Aorta (tissue), 5 donors: ENCODE measurements at regions of chr10 and their contacts with region 1.

Region 1: DNA sequence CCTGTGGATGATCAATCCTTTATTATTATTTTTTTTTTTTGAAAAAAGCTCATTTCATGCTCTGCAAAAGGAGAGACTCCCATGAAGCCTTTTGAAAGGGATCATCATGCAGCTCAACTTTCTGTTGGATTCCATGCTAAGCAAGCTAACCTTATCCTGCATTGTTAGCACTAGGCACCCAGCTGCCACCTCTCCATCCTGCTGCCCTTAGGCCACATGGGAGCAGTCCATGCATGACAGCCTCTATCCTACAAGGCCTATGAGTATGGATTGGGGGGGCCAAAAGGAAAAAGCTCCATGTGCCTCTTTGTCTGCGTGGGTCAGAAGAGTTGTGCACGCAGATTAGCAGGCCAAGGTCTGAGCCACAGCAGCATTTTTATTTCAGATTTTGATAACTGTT is 19.2 kb downstream of the SMNDC1 start:
- DNase-seq: no peak
- ATAC-seq: no peak
- H3K4me3 ChIP-seq: no peak overlapping the region
- H3K27ac ChIP-seq: no peak overlapping the region
- H3K4me1 ChIP-seq: peaks cover 2 to 4% of the 10 kb centered on the region in 2 donors
- H3K27me3 ChIP-seq: no peaks in the 10 kb centered on the region

Region 2: GRCh38 chr10:109883859-109884771 is 401.4 kb before region 1 on chr10:
- intact Hi-C with region 1: loop called in 1 of 2 experiments (anchors 10 kb)
- DNase-seq: peak; percentile 71 to 82
- ATAC-seq: peak; percentile 94
- H3K4me3 ChIP-seq: no peak overlapping the region
- H3K27ac ChIP-seq: peak overlapping the region in 1 of 2 donors; percentile 0
- H3K4me1 ChIP-seq: no peaks in the 10 kb centered on the region
- H3K27me3 ChIP-seq: no peaks in the 10 kb centered on the region

Region 3: DNA sequence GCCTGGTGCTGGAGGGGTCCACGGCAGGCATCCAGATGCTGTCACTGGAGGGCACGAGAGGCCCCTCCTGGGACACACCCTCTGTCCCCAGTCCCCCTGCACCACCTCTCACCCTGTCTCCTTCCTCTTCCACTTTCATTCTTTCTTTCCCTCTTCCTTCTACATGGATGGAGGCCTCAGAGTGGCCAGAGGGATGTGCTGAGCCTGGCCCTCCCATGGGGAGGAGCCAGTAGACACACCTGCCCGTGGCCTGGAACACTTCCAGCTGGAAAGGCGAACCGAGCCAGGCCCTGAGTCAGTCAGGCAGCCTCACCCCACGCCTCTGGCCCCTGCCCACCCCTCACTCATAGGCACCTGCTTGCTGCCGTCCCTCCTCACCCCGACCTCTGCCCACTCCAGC is 134.0 kb before region 1 on chr10:
- intact Hi-C with region 1: no loop called
- DNase-seq: no peak
- ATAC-seq: peak; percentile 41
- H3K4me3 ChIP-seq: no peak overlapping the region
- H3K27ac ChIP-seq: no peak overlapping the region
- H3K4me1 ChIP-seq: no peaks in the 10 kb centered on the region
- H3K27me3 ChIP-seq: no peaks in the 10 kb centered on the region

Region 4: GRCh38 chr10:110354322-110354766 is 68.8 kb after region 1 on chr10:
- intact Hi-C with region 1: no loop called
- DNase-seq: peak; percentile 88 to 90
- ATAC-seq: peak; percentile 58
- H3K4me3 ChIP-seq: no peak overlapping the region
- H3K27ac ChIP-seq: no peak overlapping the region
- H3K4me1 ChIP-seq: no peaks in the 10 kb centered on the region
- H3K27me3 ChIP-seq: no peaks in the 10 kb centered on the region